ENCODE measurements at regions of chr7 and their contacts with region 1.

Region 1: DNA sequence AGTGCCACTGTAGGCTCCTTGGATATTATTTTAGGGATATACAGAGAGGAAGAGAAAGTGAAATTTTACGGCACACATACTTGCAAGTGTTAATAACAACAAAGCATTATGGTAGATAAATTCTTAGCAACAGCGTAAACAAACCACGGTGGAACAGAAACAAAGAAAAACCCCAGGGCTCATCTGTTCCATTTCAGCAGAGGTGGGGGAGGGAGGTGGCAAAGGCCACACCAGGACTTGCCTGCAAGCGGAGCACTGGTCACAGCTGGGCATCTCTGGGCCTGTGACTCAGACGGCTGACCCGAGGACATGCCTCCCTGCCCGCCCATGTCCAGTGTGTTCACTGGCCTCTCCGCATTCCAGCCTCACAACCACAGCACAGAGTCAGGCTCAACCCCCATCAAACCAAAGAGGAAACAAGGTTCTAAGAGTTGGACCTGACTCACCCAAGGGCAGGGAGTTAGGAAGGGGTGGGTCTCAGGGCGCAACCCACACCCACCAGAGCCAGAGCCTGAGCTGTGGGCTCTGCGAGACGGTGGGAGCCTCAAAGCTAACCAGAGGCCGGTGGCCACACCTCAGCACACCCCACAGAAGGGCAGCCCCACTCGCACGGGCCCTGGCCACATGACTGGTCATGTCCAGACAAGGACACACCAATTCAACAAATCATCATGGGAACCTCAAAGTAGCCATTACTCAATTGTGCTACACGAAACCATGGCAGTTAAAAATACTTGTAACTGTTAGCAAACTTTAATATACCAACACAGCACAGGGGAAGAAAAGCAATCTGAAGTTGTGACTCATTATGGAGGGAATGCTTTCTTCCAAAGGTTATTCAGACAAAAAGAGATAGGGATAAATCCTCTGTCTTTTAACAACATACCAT is 10.7 kb downstream of the ESYT2 start:
- DNase-seq: peak; percentile 79 to 92
- ATAC-seq: peak; percentile 69 to 89 (median 76)
- H3K4me3 ChIP-seq: peak overlapping the region; percentile 11
- H3K4me3 Mint-ChIP-seq: peak overlapping the region; percentile 75
- H3K27ac ChIP-seq: peak overlapping the region; percentile 90
- H3K27ac Mint-ChIP-seq: peak overlapping the region; percentile 95 to 99
- H3K4me1 ChIP-seq: peaks cover 66% of the 10 kb centered on the region
- H3K4me1 Mint-ChIP-seq: peaks cover 82 to 84% of the 10 kb centered on the region in 2 donors
- H3K27me3 ChIP-seq: no peaks in the 10 kb centered on the region
- H3K27me3 Mint-ChIP-seq: no peaks in the 10 kb centered on the region
- CTCF ChIP-seq: no peak

Region 2: GRCh38 chr7:158805937-158806336 is 12.6 kb before region 1 on chr7:
- intact Hi-C with region 1: loop called (anchors 1 kb)
- DNase-seq: no peak
- ATAC-seq: no peak
- H3K4me3 ChIP-seq: no peak overlapping the region
- H3K4me3 Mint-ChIP-seq: peak overlapping the region; percentile 37
- H3K27ac ChIP-seq: no peak overlapping the region
- H3K27ac Mint-ChIP-seq: peak overlapping the region; percentile 99
- H3K4me1 ChIP-seq: peaks cover 46% of the 10 kb centered on the region
- H3K4me1 Mint-ChIP-seq: peaks cover 56 to 75% of the 10 kb centered on the region in 2 donors
- H3K27me3 ChIP-seq: no peaks in the 10 kb centered on the region
- H3K27me3 Mint-ChIP-seq: no peaks in the 10 kb centered on the region
- CTCF ChIP-seq: no peak

Region 3: DNA sequence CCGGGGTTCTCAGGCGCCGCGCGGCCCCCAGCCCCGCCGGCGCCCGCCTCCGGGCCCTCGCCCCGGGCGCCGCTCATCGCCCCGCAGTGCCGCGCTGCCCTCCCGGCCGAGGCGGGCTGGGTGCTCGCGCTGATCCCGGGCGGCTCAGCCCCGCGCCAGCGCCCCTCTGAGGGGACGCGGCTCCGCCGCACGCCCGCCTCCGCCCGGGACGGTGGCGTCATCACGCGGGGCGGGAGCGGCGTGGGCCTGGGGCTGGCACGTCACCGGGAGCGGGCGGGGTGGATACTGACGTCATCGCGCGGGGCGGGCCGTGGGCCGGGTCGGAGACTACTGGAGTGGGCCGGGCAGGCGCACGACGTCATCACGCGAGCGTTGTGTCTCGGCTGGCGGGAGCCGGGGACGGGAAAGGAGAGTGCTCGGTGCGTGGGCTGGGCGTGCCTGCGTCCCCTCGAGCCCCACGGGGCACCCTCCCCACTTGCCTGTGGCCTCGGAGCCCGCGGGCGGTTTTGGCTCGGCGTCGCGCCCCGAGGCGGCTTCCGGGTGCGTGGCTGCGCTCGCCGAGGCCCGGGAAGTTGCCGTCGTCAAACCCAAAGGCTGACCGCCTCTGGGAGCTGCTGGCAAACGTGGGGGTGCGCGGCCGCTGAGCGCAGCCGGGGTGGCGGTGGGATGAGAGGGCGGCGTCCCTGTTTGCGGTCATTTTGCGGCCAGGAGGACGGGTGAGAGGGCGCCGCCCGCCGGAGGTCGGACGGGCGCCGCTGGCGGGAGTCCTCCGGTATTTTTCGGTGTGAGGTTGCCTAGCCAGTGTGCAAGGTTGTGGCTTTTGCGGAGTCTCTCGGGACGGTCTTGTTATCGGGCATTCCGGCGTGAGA is 11.0 kb after region 1 on chr7 and contains the start of gene ESYT2:
- intact Hi-C with region 1: loop called (anchors 1 kb)
- DNase-seq: peak; percentile 99 to 100
- ATAC-seq: peak; percentile 78 to 89 (median 80)
- H3K4me3 ChIP-seq: peak within 1 kb of the TSS; percentile 67
- H3K4me3 Mint-ChIP-seq: peak within 1 kb of the TSS; percentile 97
- H3K27ac ChIP-seq: peak within 1 kb of the TSS; percentile 97
- H3K27ac Mint-ChIP-seq: peak within 1 kb of the TSS; percentile 82 to 92
- H3K4me1 ChIP-seq: peaks cover 38% of the 10 kb centered on the region
- H3K4me1 Mint-ChIP-seq: peaks cover 37 to 41% of the 10 kb centered on the region in 2 donors
- H3K27me3 ChIP-seq: no peaks in the 10 kb centered on the region
- H3K27me3 Mint-ChIP-seq: no peaks in the 10 kb centered on the region
- CTCF ChIP-seq: no peak
- total RNA-seq, gene ESYT2: 137 to 163 (median 160) TPM

Region 4: GRCh38 chr7:158863611-158864506 is 45.3 kb after region 1 on chr7:
- intact Hi-C with region 1: loop called (anchors 5 kb)
- DNase-seq: peak in 1 of 2 donors; percentile 49
- ATAC-seq: peak; percentile 70 to 88 (median 75)
- H3K4me3 ChIP-seq: peak overlapping the region; percentile 29
- H3K4me3 Mint-ChIP-seq: peak overlapping the region; percentile 96
- H3K27ac ChIP-seq: peak overlapping the region; percentile 20
- H3K27ac Mint-ChIP-seq: peak overlapping the region; percentile 91 to 93
- H3K4me1 ChIP-seq: peaks cover 19% of the 10 kb centered on the region
- H3K4me1 Mint-ChIP-seq: peaks cover 32 to 37% of the 10 kb centered on the region in 2 donors
- H3K27me3 ChIP-seq: no peaks in the 10 kb centered on the region
- H3K27me3 Mint-ChIP-seq: no peaks in the 10 kb centered on the region
- CTCF ChIP-seq: no peak

Region 5: GRCh38 chr7:158976849-158977593 is 158.5 kb after region 1 on chr7:
- intact Hi-C with region 1: loop called (anchors 2 kb)
- DNase-seq: peak; percentile 89 to 94
- ATAC-seq: peak; percentile 80 to 92 (median 91)
- H3K4me3 ChIP-seq: peak overlapping the region; percentile 52
- H3K4me3 Mint-ChIP-seq: peak overlapping the region; percentile 91
- H3K27ac ChIP-seq: peak overlapping the region; percentile 80
- H3K27ac Mint-ChIP-seq: peak overlapping the region; percentile 85 to 91
- H3K4me1 ChIP-seq: peaks cover 20% of the 10 kb centered on the region
- H3K4me1 Mint-ChIP-seq: peaks cover 11 to 16% of the 10 kb centered on the region in 2 donors
- H3K27me3 ChIP-seq: no peaks in the 10 kb centered on the region
- H3K27me3 Mint-ChIP-seq: no peaks in the 10 kb centered on the region
- CTCF ChIP-seq: peak; percentile 95

Region 6: DNA sequence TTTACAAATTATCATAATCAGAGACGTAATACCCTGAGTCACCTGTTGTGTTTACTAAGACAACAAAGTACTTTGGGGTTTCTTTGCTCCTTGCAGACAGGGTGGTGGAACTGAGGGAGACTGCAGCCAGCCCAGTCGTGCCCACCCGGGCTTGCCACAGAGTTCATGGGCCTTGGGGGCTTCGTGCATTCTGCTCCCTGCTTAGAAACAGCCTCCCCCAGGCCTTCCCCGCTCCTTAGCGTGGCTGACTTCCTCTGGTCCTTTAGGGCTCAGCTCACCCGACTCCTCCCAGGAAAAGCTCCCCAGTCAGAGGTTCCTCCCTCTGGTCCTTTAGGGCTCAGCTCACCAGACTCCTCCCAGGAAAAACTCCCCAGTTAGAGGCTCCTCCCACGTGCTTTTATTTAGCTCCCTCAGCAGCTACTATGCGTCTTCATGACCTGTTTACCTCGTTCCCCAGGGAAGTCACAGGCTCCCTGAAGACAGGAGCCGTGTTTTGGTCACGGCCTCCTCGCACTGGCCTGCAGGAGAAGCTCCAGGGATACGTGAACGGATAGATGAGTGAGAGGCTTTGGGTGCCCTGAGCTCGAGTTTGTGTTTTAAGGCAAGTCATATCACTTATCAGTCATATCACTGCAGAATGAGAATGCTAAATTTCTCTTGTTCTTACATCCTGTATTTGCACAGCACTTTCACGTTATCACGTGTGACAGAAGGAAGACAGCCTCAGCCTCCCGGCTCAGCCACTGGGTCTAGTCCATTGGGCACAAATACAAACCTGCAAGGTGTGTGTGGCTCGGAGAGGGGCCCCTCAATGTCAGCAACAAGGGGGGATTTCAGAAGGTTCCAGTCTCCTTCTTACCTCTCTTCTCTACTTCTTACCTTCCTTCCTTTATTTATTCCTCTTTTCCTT is 378.8 kb after region 1 on chr7:
- intact Hi-C with region 1: loop called (anchors 5 kb)
- DNase-seq: peak in 1 of 2 donors; percentile 68
- ATAC-seq: peak; percentile 24 to 69 (median 35)
- H3K4me3 ChIP-seq: peak overlapping the region; percentile 2
- H3K4me3 Mint-ChIP-seq: peak overlapping the region; percentile 91
- H3K27ac ChIP-seq: peak overlapping the region; percentile 82
- H3K27ac Mint-ChIP-seq: peak overlapping the region; percentile 96 to 100
- H3K4me1 ChIP-seq: peaks cover 81% of the 10 kb centered on the region
- H3K4me1 Mint-ChIP-seq: peaks cover 59 to 69% of the 10 kb centered on the region in 2 donors
- H3K27me3 ChIP-seq: no peaks in the 10 kb centered on the region
- H3K27me3 Mint-ChIP-seq: no peaks in the 10 kb centered on the region
- CTCF ChIP-seq: no peak